ENCODE measurements at regions of chr1 and their contacts with region 1.

Region 1: DNA sequence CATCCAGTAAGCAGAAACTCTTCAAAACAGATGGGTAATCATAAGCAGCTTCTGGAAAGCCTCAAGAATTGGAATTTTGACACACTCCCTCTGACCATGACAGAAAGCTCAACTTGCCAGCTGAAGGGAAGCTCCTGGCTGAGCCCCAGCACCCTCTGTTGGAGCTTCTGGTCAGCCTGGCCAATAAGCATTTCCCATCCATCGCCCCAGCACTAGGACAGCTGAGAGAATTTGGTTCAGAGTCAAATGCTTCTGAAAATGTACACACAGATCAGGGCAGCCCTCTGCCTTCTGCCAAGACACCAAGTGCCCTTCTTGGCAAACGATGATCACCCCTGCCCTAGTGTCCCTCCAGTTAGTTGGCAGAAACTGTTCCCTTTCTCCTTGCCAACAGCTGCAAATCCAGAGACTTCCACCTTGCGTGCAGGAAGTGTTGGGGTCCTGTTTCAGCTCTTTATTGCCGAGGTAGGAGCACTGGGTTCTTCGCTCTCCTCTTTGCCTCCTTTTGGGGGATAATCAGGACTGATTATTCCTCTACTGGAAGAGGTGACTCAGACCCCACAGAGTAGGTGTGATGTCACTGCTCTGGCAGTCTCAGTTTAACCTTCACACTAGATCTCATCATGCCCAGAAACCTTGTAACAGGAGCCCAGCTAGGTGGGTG is 11.9 kb downstream of the PIGV start:
- DNase-seq: peak; percentile 25
- H3K4me3 Mint-ChIP-seq: no peak overlapping the region
- H3K27ac Mint-ChIP-seq: no peak overlapping the region
- H3K4me1 Mint-ChIP-seq: no peaks in the 10 kb centered on the region
- H3K27me3 Mint-ChIP-seq: no peaks in the 10 kb centered on the region
- CTCF ChIP-seq: no peak

Region 2: DNA sequence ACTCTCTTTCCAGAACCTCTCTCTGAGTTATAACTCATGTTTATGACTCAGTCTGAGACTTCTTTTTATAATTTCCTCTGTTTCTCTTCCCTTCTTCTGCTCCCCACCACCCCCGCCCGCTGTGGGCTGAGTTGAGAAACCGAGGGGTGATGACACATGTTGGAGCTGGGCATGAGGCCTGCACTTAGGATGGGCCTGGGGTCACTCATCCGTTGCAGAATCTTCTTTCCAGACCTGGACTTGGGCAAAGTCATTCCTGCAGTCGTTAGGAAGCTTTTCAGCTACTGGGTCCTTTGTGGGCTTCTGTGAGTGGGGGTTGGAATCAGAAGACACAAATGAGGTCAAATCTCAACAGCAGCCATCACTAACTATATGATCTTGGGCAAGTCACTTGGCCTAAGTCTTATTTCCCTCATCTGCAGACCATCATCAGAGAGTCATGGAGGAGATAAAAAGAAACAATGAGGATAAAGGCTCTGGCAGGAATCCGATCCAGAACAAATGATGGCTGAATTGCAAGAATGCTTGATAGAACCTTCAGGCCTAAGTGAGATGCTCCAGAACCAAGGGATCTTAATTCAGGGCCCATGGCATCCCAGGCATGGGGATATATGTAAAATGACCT is 216.7 kb before region 1 on chr1:
- CTCF ChIA-PET with region 1: no interaction called
- intact Hi-C with region 1: no loop called
- DNase-seq: no peak
- H3K4me3 Mint-ChIP-seq: no peak overlapping the region
- H3K27ac Mint-ChIP-seq: no peak overlapping the region
- H3K4me1 Mint-ChIP-seq: no peaks in the 10 kb centered on the region
- H3K27me3 Mint-ChIP-seq: no peaks in the 10 kb centered on the region
- CTCF ChIP-seq: no peak

Region 3: DNA sequence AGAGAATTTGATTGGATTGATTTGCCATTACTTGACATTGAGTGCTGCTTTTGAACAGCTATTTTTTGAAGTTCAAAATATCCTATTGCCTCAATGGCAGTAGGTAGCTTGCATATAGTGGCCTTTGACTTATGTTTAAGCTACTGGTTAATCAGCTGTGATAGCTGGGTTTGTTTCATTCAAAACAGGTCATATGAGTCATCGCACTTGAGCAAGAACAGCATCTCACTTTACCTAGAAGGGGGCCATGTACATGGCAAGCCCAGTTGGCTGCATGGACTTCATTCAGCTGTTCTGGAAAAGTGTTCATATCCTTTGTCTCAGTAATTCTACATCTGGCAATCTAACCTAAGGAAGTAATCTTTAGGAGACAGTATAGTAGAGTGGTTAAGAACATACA is 132.8 kb before region 1 on chr1:
- CTCF ChIA-PET with region 1: interaction called, 11 read pairs
- intact Hi-C with region 1: no loop called
- DNase-seq: no peak
- H3K4me3 Mint-ChIP-seq: no peak overlapping the region
- H3K27ac Mint-ChIP-seq: no peak overlapping the region
- H3K4me1 Mint-ChIP-seq: no peaks in the 10 kb centered on the region
- H3K27me3 Mint-ChIP-seq: no peaks in the 10 kb centered on the region
- CTCF ChIP-seq: no peak